CD4-positive, alpha-beta memory T cell (primary cell): ENCODE measurements at regions of chr12 and their contacts with region 1.

Region 1: DNA sequence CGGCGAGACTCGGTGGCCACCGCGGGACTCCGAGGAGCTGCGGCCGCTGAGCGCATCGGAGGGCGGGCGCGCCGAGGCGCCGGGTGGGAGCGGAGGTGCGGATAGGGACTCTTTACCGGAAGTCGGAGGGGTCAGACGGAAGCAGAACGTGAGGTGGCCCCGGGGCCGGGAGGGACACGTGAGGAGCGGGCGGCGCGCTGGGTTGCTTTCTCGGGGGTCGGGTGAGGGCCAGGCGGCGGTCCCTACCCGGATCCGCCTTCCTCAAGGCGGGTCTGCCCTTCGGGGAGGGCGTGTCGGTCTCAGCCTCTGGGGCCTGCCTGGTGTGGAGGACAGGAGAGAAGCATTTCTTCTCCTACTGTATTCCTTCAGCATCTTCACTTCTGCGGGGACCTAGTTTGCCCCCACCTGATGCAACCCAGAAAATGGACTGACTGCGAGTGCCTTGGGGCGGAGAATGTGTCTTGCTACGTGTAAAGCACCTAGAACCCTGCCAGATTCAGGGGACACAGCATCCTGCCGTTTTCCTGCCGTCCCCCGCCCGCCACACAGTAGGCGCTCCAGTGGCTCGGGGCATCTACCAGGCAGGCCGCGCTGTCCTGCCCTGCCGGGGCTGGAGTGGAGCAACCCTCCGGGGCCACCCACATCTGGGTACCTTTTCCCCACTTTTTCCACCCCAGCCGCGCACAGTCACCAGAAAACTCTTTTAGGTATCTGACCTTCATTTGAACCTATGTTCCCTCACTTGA is 517 bp upstream of the ATXN2 start:
- DNase-seq: peak; percentile 86 to 92 (median 89)
- H3K4me3 ChIP-seq: peak overlapping the region; percentile 75 to 91
- H3K4me3 Mint-ChIP-seq: peak overlapping the region; percentile 79 to 91 (median 88)
- H3K27ac ChIP-seq: peak overlapping the region; percentile 83
- H3K27ac Mint-ChIP-seq: peak overlapping the region; percentile 60 to 96 (median 92)
- H3K4me1 ChIP-seq: peaks cover 32% of the 10 kb centered on the region
- H3K4me1 Mint-ChIP-seq: peaks cover 18 to 40% (median 30%) of the 10 kb centered on the region in 4 donors
- H3K27me3 ChIP-seq: no peaks in the 10 kb centered on the region
- H3K27me3 Mint-ChIP-seq: no peaks in the 10 kb centered on the region

Region 2: DNA sequence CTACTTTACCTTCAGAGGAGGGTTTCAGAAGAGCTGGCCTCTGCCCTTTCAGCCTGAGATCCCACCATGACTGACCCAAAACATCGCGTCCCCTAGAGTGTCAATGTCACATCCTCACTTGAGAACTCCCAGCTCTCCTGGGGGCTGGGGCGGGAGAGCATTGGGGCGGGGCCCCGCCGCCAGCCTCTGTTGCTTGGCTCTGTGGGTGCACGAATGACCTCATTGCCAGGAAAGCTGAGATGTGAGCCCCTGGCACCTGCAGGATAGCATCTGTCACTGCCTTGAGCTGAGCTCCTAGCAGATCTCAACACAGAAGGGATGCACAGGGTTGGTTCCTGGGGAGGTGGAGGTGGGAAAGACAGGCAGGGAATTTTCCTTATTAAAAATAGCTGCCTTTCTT is 658.7 kb before region 1 on chr12:
- CTCF ChIA-PET with region 1: no interaction called
- POLR2A ChIA-PET with region 1: no interaction called
- intact Hi-C with region 1: no loop called
- DNase-seq: no peak
- H3K4me3 ChIP-seq: no peak overlapping the region
- H3K4me3 Mint-ChIP-seq: no peak overlapping the region
- H3K27ac ChIP-seq: no peak overlapping the region
- H3K27ac Mint-ChIP-seq: no peak overlapping the region
- H3K4me1 ChIP-seq: peaks cover 7% of the 10 kb centered on the region
- H3K4me1 Mint-ChIP-seq: peaks cover 0 to 7% (median 3%) of the 10 kb centered on the region in 4 donors
- H3K27me3 ChIP-seq: peaks cover 3% of the 10 kb centered on the region
- H3K27me3 Mint-ChIP-seq: peaks cover 11 to 18% of the 10 kb centered on the region in 2 donors

Region 3: GRCh38 chr12:111405149-111405860 is 194.3 kb before region 1 on chr12:
- CTCF ChIA-PET with region 1: no interaction called
- POLR2A ChIA-PET with region 1: no interaction called
- intact Hi-C with region 1: loop called (anchors 2 kb)
- DNase-seq: peak; percentile 97 to 98 (median 98)
- H3K4me3 ChIP-seq: peak overlapping the region; percentile 29 to 90
- H3K4me3 Mint-ChIP-seq: peak overlapping the region; percentile 86 to 95 (median 90)
- H3K27ac ChIP-seq: peak overlapping the region; percentile 97
- H3K27ac Mint-ChIP-seq: peak overlapping the region; percentile 92 to 98 (median 95)
- H3K4me1 ChIP-seq: peaks cover 61% of the 10 kb centered on the region
- H3K4me1 Mint-ChIP-seq: peaks cover 35 to 74% (median 52%) of the 10 kb centered on the region in 4 donors
- H3K27me3 ChIP-seq: no peaks in the 10 kb centered on the region
- H3K27me3 Mint-ChIP-seq: no peaks in the 10 kb centered on the region

Region 4: DNA sequence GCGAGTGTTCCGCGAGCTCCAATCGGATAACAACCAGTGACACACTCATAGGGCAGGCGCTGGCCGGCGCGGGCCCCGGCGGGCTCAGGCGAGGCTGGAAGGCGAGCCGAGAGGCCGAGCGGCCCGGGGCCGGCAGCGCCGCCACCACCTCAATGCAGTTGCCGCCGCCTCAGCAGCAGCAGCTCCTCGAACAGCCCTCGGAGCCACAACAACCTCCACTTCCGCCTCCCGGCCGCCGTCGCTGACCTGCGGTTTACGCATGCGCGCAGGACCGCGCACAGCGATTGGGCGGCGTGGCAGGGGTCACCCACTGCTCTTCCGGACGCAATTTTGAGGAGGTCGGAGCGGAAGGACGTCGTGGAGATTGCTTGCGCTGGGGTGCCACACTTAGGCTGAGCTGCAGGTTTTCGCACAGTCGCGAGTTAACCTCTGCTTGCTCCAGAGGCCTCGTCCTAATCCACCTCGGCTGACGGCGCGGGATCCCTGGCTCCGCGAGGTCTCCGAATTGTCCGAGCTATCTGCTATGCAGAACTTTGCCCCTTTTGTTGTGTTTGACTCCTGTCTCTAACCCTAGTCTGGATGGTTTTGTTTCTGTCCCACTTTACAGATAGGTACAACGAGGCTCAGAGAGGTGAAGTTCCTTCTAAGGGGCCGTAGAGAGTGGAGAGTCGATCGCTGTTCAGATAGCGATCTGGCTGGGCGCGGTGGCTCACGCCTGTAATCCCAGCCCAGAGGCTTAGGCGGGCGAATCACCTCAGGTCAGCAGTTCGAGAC is 86.3 kb after region 1 on chr12 and contains the starts of genes ACAD10 and BRAP:
- CTCF ChIA-PET with region 1: no interaction called
- POLR2A ChIA-PET with region 1: interaction called, 4 read pairs
- intact Hi-C with region 1: loop called (anchors 1 kb)
- DNase-seq: peak; percentile 89 to 98 (median 94)
- H3K4me3 ChIP-seq: peak within 1 kb of the TSS; percentile 68 to 91
- H3K4me3 Mint-ChIP-seq: peak within 1 kb of the TSS; percentile 90 to 99 (median 96)
- H3K27ac ChIP-seq: peak within 1 kb of the TSS; percentile 83
- H3K27ac Mint-ChIP-seq: peak within 1 kb of the TSS; percentile 81 to 98 (median 97)
- H3K4me1 ChIP-seq: peaks cover 28% of the 10 kb centered on the region
- H3K4me1 Mint-ChIP-seq: peaks cover 17 to 64% (median 41%) of the 10 kb centered on the region in 4 donors
- H3K27me3 ChIP-seq: no peaks in the 10 kb centered on the region
- H3K27me3 Mint-ChIP-seq: no peaks in the 10 kb centered on the region
- total RNA-seq, gene ACAD10: 52.2 to 58.3 TPM
- total RNA-seq, gene BRAP: 25.9 to 27.5 TPM

Region 5: GRCh38 chr12:112125250-112125999 is 525.8 kb after region 1 on chr12 and contains the start of gene TRAFD1:
- CTCF ChIA-PET with region 1: no interaction called
- POLR2A ChIA-PET with region 1: interaction called, 3 read pairs
- intact Hi-C with region 1: loop called (anchors 5 kb)
- DNase-seq: peak; percentile 97 to 99 (median 98)
- H3K4me3 ChIP-seq: peak within 1 kb of the TSS; percentile 63 to 99
- H3K4me3 Mint-ChIP-seq: peak within 1 kb of the TSS; percentile 78 to 93 (median 88)
- H3K27ac ChIP-seq: peak within 1 kb of the TSS; percentile 86
- H3K27ac Mint-ChIP-seq: peak within 1 kb of the TSS; percentile 83 to 95 (median 91)
- H3K4me1 ChIP-seq: peaks cover 52% of the 10 kb centered on the region
- H3K4me1 Mint-ChIP-seq: peaks cover 15 to 50% (median 33%) of the 10 kb centered on the region in 4 donors
- H3K27me3 ChIP-seq: no peaks in the 10 kb centered on the region
- H3K27me3 Mint-ChIP-seq: no peaks in the 10 kb centered on the region
- total RNA-seq, gene TRAFD1: 38.7 to 42.7 TPM